ENCODE measurements at regions of chr5 and their contacts with region 1.

Region 1: GRCh38 chr5:146965761-146966659 is 87.5 kb upstream of the PPP2R2B start:
- DNase-seq: peak; percentile 70
- H3K4me3 ChIP-seq: no peak overlapping the region
- H3K27ac ChIP-seq: no peak overlapping the region
- H3K4me1 ChIP-seq: no peaks in the 10 kb centered on the region
- CTCF ChIP-seq: peak; percentile 87

Region 2: DNA sequence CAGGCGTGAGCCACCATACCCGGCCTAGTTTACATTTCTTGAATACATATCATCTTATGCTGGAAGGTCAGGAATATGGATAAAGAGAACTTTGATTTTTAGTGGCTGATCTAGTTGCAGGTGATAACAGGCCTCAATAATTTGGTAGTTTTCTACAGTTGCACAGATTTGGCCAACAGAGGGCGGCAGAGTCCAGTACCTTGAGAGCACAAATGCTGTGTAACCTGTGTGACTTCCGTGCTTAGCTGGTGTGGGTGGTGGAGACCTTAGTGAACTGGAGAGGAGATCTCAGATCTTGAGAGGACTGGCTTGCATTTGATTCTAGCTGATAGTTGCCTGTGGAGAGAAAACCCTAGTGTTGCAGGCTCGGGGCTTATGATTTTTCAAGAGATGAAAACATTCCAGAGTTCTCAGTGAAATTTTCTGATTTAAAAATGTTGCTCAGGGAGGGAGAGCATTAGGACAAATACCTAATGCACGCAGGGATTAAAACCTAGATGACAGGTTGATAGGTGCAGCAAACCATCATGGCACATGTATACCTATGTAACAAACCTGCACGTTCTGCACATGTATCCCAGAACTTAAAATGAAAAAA is 432.7 kb before region 1 on chr5:
- CTCF ChIA-PET with region 1: no interaction called
- POLR2A ChIA-PET with region 1: no interaction called
- intact Hi-C with region 1: loop called (anchors 2 kb)
- DNase-seq: peak; percentile 81
- H3K4me3 ChIP-seq: no peak overlapping the region
- H3K27ac ChIP-seq: no peak overlapping the region
- H3K4me1 ChIP-seq: no peaks in the 10 kb centered on the region
- CTCF ChIP-seq: peak; percentile 90

Region 3: GRCh38 chr5:146541958-146542849 is 423.8 kb before region 1 on chr5:
- CTCF ChIA-PET with region 1: no interaction called
- POLR2A ChIA-PET with region 1: no interaction called
- intact Hi-C with region 1: loop called (anchors 1 kb)
- DNase-seq: peak; percentile 55
- H3K4me3 ChIP-seq: no peak overlapping the region
- H3K27ac ChIP-seq: no peak overlapping the region
- H3K4me1 ChIP-seq: no peaks in the 10 kb centered on the region
- CTCF ChIP-seq: peak; percentile 93

Region 4: DNA sequence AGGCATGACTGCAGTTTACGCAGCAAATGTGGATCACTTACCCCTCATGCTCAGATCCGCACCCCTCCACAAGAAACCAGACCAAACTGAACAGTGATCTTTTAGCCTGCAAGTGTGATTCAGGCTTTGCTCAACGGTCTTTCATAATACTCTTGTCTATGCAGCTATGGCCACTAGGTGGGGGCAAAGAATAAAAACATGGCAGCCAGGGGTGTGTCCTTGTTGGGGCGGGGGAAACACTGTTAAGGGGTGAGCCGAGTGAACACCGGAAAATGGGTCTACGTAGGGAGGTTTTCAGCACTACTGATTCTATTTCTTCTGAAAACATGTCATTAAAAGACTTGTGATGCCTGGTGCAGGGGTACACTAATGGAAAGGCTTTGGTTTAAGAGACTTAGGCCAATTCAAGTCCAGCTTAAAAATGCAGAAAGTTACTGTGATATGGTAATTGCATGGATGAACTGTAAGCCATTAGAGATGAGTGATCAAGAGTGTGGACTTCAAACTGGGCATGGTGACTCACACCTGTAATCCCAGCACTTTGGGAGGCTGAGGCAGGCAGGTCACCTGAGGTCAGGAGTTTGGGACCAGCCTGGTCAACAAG is 400.1 kb before region 1 on chr5:
- CTCF ChIA-PET with region 1: no interaction called
- POLR2A ChIA-PET with region 1: no interaction called
- intact Hi-C with region 1: loop called (anchors 2 kb)
- DNase-seq: peak; percentile 60
- H3K4me3 ChIP-seq: no peak overlapping the region
- H3K27ac ChIP-seq: no peak overlapping the region
- H3K4me1 ChIP-seq: no peaks in the 10 kb centered on the region
- CTCF ChIP-seq: peak; percentile 75

Region 5: GRCh38 chr5:146662229-146662628 is 303.8 kb before region 1 on chr5:
- CTCF ChIA-PET with region 1: no interaction called
- POLR2A ChIA-PET with region 1: no interaction called
- intact Hi-C with region 1: loop called (anchors 1 kb)
- DNase-seq: peak; percentile 47
- H3K4me3 ChIP-seq: no peak overlapping the region
- H3K27ac ChIP-seq: no peak overlapping the region
- H3K4me1 ChIP-seq: no peaks in the 10 kb centered on the region
- CTCF ChIP-seq: peak; percentile 88

Region 6: DNA sequence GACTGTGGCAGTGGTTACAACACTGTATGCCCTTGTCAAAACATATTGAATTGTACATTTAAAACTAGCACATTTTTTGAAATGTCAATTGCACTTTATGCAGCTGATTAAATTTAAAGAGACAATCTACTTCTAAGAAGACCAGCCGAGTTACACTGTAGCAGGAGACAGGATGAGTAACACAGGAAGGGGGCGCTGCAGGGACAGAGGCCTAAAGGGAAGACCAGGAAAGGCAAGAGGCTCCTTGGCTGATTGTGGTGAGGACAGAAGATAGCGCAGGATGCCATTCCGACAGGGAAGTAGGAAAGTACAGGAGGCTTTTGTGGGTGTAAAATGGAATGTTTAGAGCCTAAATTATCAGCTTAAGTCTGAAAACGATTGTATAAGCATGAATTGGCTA is 59.2 kb before region 1 on chr5:
- CTCF ChIA-PET with region 1: no interaction called
- POLR2A ChIA-PET with region 1: no interaction called
- intact Hi-C with region 1: no loop called
- DNase-seq: no peak
- H3K4me3 ChIP-seq: no peak overlapping the region
- H3K27ac ChIP-seq: no peak overlapping the region
- H3K4me1 ChIP-seq: no peaks in the 10 kb centered on the region
- CTCF ChIP-seq: no peak

Region 7: DNA sequence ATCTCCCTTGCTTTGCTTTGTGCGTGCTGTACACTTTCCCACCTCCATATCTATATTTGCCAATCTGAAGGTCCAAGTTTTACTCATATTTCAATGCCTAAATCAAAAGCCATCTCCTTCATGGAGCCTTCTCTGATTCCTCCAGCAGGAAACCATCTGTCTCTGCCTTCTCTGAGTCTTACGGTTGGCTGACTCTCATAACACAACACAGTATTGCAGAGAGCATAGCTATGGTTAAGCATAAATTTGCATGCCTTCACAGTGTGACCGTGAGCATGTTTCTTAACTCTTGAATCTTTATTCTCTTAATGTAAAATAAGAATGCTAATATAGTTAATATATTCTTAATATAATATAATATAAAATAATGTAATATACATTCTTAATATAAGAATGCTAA is 49.4 kb after region 1 on chr5:
- CTCF ChIA-PET with region 1: no interaction called
- POLR2A ChIA-PET with region 1: no interaction called
- intact Hi-C with region 1: no loop called
- DNase-seq: no peak
- H3K4me3 ChIP-seq: no peak overlapping the region
- H3K27ac ChIP-seq: no peak overlapping the region
- H3K4me1 ChIP-seq: no peaks in the 10 kb centered on the region
- CTCF ChIP-seq: no peak

Region 8: GRCh38 chr5:148005788-148006520 is 1039.9 kb after region 1 on chr5:
- CTCF ChIA-PET with region 1: no interaction called
- POLR2A ChIA-PET with region 1: no interaction called
- intact Hi-C with region 1: no loop called
- DNase-seq: peak; percentile 8
- H3K4me3 ChIP-seq: no peak overlapping the region
- H3K27ac ChIP-seq: no peak overlapping the region
- H3K4me1 ChIP-seq: no peaks in the 10 kb centered on the region
- CTCF ChIP-seq: peak; percentile 69

Measured in OCI-LY7 (cell line).